Endothelial cell of umbilical vein (primary cell): ENCODE measurements at regions of chr5 and their contacts with region 1.

Region 1: GRCh38 chr5:140145818-140146522 is 20.2 kb downstream of the IGIP start:
- DNase-seq: peak; percentile 61
- H3K4me3 ChIP-seq: peak overlapping the region in 1 of 3 experiments; percentile 8
- H3K27ac ChIP-seq: no peak overlapping the region
- H3K4me1 ChIP-seq: no peaks in the 10 kb centered on the region
- H3K27me3 ChIP-seq: peaks cover 0 to 6% of the 10 kb centered on the region in 2 experiments
- CTCF ChIP-seq: peak; percentile 67 to 77
- POLR2A ChIP-seq: no peak

Region 2: GRCh38 chr5:139711067-139711905 is 434.7 kb before region 1 on chr5:
- CTCF ChIA-PET with region 1: no interaction called
- POLR2A ChIA-PET with region 1: no interaction called
- dilution Hi-C with region 1: no loop called
- intact Hi-C with region 1: no loop called
- DNase-seq: no peak
- H3K4me3 ChIP-seq: peak overlapping the region in 1 of 3 experiments; percentile 20
- H3K27ac ChIP-seq: no peak overlapping the region
- H3K4me1 ChIP-seq: peaks cover 7% of the 10 kb centered on the region
- H3K27me3 ChIP-seq: peaks cover 11 to 13% of the 10 kb centered on the region in 2 experiments
- CTCF ChIP-seq: peak in 1 of 2 donors; percentile 12
- POLR2A ChIP-seq: no peak

Region 3: GRCh38 chr5:139787568-139788293 is 358.2 kb before region 1 on chr5:
- CTCF ChIA-PET with region 1: interaction called, 14 read pairs
- POLR2A ChIA-PET with region 1: no interaction called
- dilution Hi-C with region 1: no loop called
- intact Hi-C with region 1: no loop called
- DNase-seq: peak; percentile 82
- H3K4me3 ChIP-seq: peak overlapping the region; percentile 61 to 87 (median 83)
- H3K27ac ChIP-seq: no peak overlapping the region
- H3K4me1 ChIP-seq: peaks cover 3% of the 10 kb centered on the region
- H3K27me3 ChIP-seq: peaks cover 2% of the 10 kb centered on the region in 2 experiments
- CTCF ChIP-seq: peak; percentile 93 to 98
- POLR2A ChIP-seq: no peak

Region 4: DNA sequence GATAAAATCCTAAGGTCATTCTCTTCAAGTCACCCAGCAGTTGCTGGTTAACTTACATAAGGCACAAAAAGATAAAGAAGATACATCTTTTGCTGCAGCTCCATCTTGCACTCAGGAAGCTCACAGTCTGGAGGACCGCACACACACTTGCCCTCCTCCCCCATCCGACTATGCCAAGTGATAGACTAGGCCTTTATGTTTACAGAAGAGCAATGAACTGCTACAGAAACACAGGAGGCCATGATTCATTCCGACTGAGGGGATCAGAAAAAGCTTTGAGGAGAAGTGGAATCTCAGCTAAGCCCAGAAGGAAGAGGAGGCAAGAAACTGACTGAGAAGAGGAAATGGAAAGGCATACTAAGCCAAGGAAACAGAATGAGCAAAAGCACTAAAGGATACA is 120.2 kb before region 1 on chr5:
- CTCF ChIA-PET with region 1: no interaction called
- POLR2A ChIA-PET with region 1: no interaction called
- dilution Hi-C with region 1: no loop called
- intact Hi-C with region 1: no loop called
- DNase-seq: no peak
- H3K4me3 ChIP-seq: no peak overlapping the region
- H3K27ac ChIP-seq: no peak overlapping the region
- H3K4me1 ChIP-seq: no peaks in the 10 kb centered on the region
- H3K27me3 ChIP-seq: peaks cover 27 to 31% of the 10 kb centered on the region in 2 experiments
- CTCF ChIP-seq: no peak
- POLR2A ChIP-seq: no peak

Region 5: DNA sequence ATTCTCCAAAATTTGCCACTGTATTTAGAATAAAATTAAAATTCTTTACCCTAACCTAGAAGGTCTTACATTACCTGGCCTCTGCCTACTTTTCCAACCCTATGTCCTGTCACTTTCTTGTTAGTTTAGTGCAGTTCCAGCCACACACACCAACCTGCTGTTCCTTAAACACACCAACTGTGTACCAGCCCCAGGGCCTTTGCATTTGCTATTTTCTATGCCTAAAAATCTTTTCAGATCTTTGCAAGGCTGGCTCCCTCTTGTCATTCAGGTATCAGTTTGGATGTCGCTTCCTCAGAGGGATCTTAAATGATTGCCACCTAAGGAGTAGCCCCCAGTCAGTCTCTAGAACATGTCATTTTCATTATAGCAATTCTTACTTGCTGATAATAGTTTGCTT is 85.2 kb before region 1 on chr5:
- CTCF ChIA-PET with region 1: interaction called, 17 read pairs
- POLR2A ChIA-PET with region 1: no interaction called
- dilution Hi-C with region 1: no loop called
- intact Hi-C with region 1: no loop called
- DNase-seq: no peak
- H3K4me3 ChIP-seq: no peak overlapping the region
- H3K27ac ChIP-seq: no peak overlapping the region
- H3K4me1 ChIP-seq: no peaks in the 10 kb centered on the region
- H3K27me3 ChIP-seq: peaks cover 38 to 74% of the 10 kb centered on the region in 2 experiments
- CTCF ChIP-seq: no peak
- POLR2A ChIP-seq: no peak

Region 6: DNA sequence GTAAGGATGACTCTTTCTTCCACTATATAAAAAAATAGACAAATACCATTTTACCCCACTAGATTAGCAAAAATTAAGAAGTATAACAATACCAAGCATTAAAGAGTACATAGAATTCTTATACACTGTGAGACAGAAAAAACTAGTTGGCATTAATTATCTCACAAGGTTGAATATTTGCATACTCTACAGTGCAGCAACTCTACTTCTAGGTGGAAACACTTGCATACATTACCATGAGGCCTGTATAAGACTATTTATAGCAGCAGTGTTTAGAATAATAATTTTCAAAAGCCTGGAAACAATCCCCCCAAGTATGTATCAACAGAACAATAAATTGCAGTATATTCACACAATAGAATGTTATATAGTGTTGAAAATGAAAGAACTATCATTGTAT is 51.1 kb before region 1 on chr5:
- CTCF ChIA-PET with region 1: interaction called, 10 read pairs
- POLR2A ChIA-PET with region 1: no interaction called
- dilution Hi-C with region 1: no loop called
- intact Hi-C with region 1: no loop called
- DNase-seq: no peak
- H3K4me3 ChIP-seq: no peak overlapping the region
- H3K27ac ChIP-seq: no peak overlapping the region
- H3K4me1 ChIP-seq: no peaks in the 10 kb centered on the region
- H3K27me3 ChIP-seq: peaks cover 9 to 28% of the 10 kb centered on the region in 2 experiments
- CTCF ChIP-seq: no peak
- POLR2A ChIP-seq: no peak

Region 7: GRCh38 chr5:140113699-140114263 is 32.2 kb before region 1 on chr5 and contains the start of gene PURA:
- CTCF ChIA-PET with region 1: interaction called, 92 read pairs
- POLR2A ChIA-PET with region 1: interaction called, 3 read pairs
- dilution Hi-C with region 1: no loop called
- intact Hi-C with region 1: loop called (anchors 1 kb)
- DNase-seq: peak; percentile 94
- H3K4me3 ChIP-seq: peak within 1 kb of the TSS; percentile 63 to 73 (median 69)
- H3K27ac ChIP-seq: peak within 1 kb of the TSS; percentile 49
- H3K4me1 ChIP-seq: peaks cover 19% of the 10 kb centered on the region
- H3K27me3 ChIP-seq: peaks cover 12 to 34% of the 10 kb centered on the region in 2 experiments
- CTCF ChIP-seq: no peak
- POLR2A ChIP-seq: peak; percentile 63
- total RNA-seq, gene PURA: 8.1 and 8.2 TPM in 2 replicates

Region 8: GRCh38 chr5:140157032-140157803 is 11.2 kb after region 1 on chr5:
- CTCF ChIA-PET with region 1: interaction called, 57 read pairs
- POLR2A ChIA-PET with region 1: no interaction called
- dilution Hi-C with region 1: no loop called
- intact Hi-C with region 1: loop called (anchors 1 kb)
- DNase-seq: peak; percentile 75
- H3K4me3 ChIP-seq: peak overlapping the region in 2 of 3 experiments; percentile 19 to 24
- H3K27ac ChIP-seq: no peak overlapping the region
- H3K4me1 ChIP-seq: peaks cover 4% of the 10 kb centered on the region
- H3K27me3 ChIP-seq: no peaks in the 10 kb centered on the region
- CTCF ChIP-seq: peak; percentile 81 to 86
- POLR2A ChIP-seq: no peak

Region 9: DNA sequence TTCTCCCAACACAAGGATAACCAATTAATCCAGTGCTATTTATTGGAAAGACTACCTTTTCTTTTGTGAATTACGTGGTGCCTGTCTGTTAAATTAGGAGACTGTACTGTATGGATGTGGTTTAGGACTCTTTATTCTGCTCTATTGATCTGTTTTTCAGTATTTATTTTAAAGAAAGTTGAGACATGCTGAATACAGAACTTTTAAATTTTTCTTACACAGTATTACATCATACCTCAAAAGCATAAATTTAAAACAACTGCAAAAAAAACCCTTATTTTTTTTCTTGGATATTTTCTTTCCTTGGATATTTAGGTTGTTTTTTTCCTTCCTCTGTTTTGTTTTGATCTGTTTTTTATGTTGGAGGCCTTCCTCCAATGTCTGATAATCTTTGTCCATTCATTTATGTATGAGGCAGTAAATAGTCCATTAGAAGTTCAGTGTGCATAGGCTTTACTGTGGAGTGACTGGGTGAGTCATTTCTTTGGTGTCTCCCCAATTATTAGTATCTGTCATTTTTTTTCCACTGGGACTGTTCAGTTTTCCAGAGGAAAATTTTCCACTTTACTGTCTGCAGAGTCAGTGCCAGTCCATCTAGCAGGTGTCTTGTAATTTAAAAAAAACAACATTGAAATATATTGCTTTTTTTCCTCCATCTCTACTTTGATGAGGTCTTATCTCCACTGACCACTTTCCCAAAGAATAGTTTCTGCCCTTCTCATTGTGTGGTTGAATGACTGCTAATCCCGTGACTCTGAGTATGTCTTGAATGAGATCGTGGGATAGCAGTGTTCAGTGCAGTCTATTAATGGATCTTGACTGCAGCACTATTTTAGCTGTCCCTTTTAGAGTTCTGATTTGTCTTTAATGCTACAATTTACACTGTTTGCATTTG is 44.3 kb after region 1 on chr5:
- CTCF ChIA-PET with region 1: interaction called, 10 read pairs
- POLR2A ChIA-PET with region 1: no interaction called
- dilution Hi-C with region 1: no loop called
- intact Hi-C with region 1: no loop called
- DNase-seq: peak; percentile 82
- H3K4me3 ChIP-seq: no peak overlapping the region
- H3K27ac ChIP-seq: peak overlapping the region; percentile 2
- H3K4me1 ChIP-seq: no peaks in the 10 kb centered on the region
- H3K27me3 ChIP-seq: no peaks in the 10 kb centered on the region
- CTCF ChIP-seq: no peak
- POLR2A ChIP-seq: no peak

Region 10: GRCh38 chr5:140753561-140753960 is 607.6 kb after region 1 on chr5:
- CTCF ChIA-PET with region 1: no interaction called
- POLR2A ChIA-PET with region 1: no interaction called
- dilution Hi-C with region 1: no loop called
- intact Hi-C with region 1: no loop called
- DNase-seq: no peak
- H3K4me3 ChIP-seq: no peak overlapping the region
- H3K27ac ChIP-seq: no peak overlapping the region
- H3K4me1 ChIP-seq: no peaks in the 10 kb centered on the region
- H3K27me3 ChIP-seq: no peaks in the 10 kb centered on the region
- CTCF ChIP-seq: no peak
- POLR2A ChIP-seq: no peak

Region 11: GRCh38 chr5:140800816-140801493 is 655.0 kb after region 1 on chr5 and contains the start of gene PCDHA3:
- CTCF ChIA-PET with region 1: no interaction called
- POLR2A ChIA-PET with region 1: no interaction called
- dilution Hi-C with region 1: no loop called
- intact Hi-C with region 1: no loop called
- DNase-seq: peak; percentile 34
- H3K4me3 ChIP-seq: peak within 1 kb of the TSS in 2 of 3 experiments; percentile 23 to 24
- H3K27ac ChIP-seq: no peak within 1 kb of the TSS
- H3K4me1 ChIP-seq: no peaks in the 10 kb centered on the region
- H3K27me3 ChIP-seq: no peaks in the 10 kb centered on the region
- CTCF ChIP-seq: peak in 1 of 2 donors; percentile 13
- POLR2A ChIP-seq: no peak
- total RNA-seq, gene PCDHA3: 0.09 TPM in 1 of 2 replicates, not detected in the other